Heart right ventricle (tissue), 16 donors: ENCODE measurements at regions of chr19 and their contacts with region 1.

Region 1: GRCh38 chr19:41133260-41133659 is 19.0 kb downstream of the CYP2F1 start:
- DNase-seq: no peak
- ATAC-seq: peak in 2 of 8 donors; percentile 16 to 29
- H3K4me3 ChIP-seq: no peak overlapping the region
- H3K27ac ChIP-seq: no peak overlapping the region
- H3K4me1 ChIP-seq: peaks cover 0 to 8% (median 0%) of the 10 kb centered on the region in 9 donors
- H3K27me3 ChIP-seq: peaks cover 0 to 8% (median 0%) of the 10 kb centered on the region in 7 donors
- CTCF ChIP-seq: no peak

Region 2: DNA sequence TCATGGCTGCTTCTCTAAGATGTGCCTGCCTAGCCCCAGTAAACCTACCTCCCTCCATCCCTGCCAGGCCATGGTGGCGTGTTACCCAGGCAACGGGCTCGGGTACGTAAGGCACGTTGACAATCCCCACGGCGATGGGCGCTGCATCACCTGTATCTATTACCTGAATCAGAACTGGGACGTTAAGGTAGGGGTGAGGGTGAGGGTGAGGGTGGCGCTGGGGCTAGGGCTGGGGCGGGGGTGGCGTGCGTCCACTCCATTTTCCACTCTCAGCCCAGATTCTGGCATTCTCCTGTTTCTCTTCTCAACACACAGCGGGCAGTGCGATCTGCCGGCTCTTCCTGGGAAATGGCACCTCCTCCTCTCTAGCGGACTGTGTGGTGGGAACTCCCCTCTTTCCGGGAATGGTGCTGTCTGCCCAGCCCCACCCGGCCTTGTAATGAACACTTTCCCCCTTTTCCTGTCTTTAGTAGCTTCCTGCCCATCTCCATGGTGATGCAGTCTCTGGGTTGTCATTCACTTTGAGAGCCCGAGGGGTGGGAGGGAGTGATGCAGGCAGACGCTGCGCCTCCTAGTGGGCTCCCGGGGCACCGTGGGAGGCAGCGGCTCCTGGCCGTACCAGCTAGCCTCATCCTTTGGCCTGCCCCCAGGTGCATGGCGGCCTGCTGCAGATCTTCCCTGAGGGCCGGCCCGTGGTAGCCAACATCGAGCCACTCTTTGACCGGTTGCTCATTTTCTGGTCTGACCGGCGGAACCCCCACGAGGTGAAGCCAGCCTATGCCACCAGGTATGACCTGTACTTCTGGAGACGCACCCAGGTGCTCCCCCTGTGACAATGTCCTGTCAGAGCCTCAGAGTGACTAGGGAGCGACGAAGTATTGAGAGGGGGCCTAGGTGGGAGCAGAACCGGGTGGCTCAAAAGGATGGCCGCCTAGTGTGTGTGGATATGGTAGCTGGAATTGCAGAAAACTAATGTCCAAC is 326.5 kb before region 1 on chr19:
- intact Hi-C with region 1: loop called in 1 of 10 experiments (anchors 5 kb)
- DNase-seq: peak; percentile 80 to 92
- ATAC-seq: peak; percentile 30 to 72 (median 58)
- H3K4me3 ChIP-seq: peak overlapping the region in 6 of 10 donors; percentile 2 to 32 (median 24)
- H3K27ac ChIP-seq: peak overlapping the region; percentile 42 to 99 (median 94)
- H3K4me1 ChIP-seq: peaks cover 47 to 93% (median 89%) of the 10 kb centered on the region in 9 donors
- H3K27me3 ChIP-seq: no peaks in the 10 kb centered on the region
- CTCF ChIP-seq: peak; percentile 61 to 94 (median 87)

Region 3: DNA sequence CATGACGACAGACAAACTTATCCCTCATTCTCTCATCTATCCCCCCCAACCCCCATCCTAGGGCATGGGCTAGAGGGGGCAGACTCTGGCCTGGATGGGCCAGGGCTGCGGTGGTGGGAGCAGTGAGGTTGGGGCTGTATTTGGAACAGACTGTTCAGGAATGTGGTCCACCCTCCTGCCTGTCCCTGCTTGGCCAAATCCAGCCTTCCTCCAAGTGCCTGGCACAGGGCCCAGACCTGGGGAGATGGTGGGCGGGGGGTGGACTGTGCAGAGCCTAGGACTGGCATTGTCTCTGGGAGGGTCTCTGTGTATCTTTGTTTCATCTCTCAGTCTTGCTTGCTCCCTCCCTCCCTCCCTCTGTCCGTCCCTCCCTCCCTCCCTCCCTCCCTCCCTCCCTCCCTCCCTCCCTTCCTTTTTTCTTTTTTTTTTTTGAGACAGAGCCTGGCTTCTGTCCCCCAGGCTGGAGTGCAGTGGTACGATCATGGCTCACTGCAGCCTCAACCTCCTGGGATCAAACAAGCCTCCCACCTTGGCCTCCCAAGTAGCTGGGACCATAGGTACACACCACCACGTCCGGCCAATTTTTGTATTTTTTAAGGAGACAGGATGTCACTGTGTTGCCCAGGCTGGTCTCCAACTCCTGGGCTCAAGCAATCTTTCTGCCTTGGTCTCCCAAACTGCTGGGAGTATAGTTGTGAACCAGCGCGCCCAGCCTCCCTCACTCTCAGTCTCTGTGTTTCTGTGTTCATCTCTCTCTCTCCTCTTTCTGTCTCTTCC is 319.9 kb before region 1 on chr19:
- intact Hi-C with region 1: loop called in 2 of 10 experiments (anchors 5 kb)
- DNase-seq: no peak
- ATAC-seq: no peak
- H3K4me3 ChIP-seq: no peak overlapping the region
- H3K27ac ChIP-seq: no peak overlapping the region
- H3K4me1 ChIP-seq: peaks cover 3 to 47% (median 34%) of the 10 kb centered on the region in 9 donors
- H3K27me3 ChIP-seq: no peaks in the 10 kb centered on the region
- CTCF ChIP-seq: no peak

Region 4: DNA sequence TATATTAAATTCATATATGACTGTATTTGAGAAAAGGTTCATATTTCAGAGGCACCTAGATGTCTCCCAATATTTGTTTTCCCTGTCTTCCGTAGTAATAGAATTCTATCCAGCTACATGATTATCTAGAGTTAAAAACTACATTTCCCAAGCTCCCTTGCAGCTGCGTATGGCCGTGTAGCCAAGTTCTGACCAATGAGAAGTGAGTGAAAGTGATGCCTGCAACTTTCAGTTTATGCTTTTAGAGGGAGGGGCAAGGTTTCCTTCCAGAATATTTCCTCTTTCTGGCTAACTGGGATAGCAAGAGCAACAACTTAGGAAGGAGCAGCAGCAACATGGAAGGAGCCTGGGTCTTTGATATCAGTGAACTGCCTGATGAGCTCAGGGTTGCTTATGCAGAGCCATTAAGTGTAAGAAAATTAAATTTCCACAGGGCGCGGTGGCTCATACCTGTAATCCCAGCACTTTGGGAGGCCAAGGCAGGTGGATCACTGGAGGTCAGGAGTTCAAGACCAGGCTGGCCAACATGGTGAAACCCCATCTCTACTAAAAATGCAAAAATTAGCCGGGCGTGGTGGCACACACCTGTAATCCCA is 68.2 kb before region 1 on chr19:
- intact Hi-C with region 1: no loop called
- DNase-seq: no peak
- ATAC-seq: no peak
- H3K4me3 ChIP-seq: no peak overlapping the region
- H3K27ac ChIP-seq: no peak overlapping the region
- H3K4me1 ChIP-seq: no peaks in the 10 kb centered on the region
- H3K27me3 ChIP-seq: peaks cover 0 to 31% (median 12%) of the 10 kb centered on the region in 7 donors
- CTCF ChIP-seq: no peak

Region 5: GRCh38 chr19:41095703-41096102 is 37.6 kb before region 1 on chr19:
- intact Hi-C with region 1: no loop called
- DNase-seq: no peak
- ATAC-seq: no peak
- H3K4me3 ChIP-seq: no peak overlapping the region
- H3K27ac ChIP-seq: no peak overlapping the region
- H3K4me1 ChIP-seq: no peaks in the 10 kb centered on the region
- H3K27me3 ChIP-seq: peaks cover 0 to 44% (median 27%) of the 10 kb centered on the region in 7 donors
- CTCF ChIP-seq: no peak

Region 6: GRCh38 chr19:41189425-41190065 is 56.3 kb after region 1 on chr19:
- intact Hi-C with region 1: no loop called
- DNase-seq: no peak
- ATAC-seq: no peak
- H3K4me3 ChIP-seq: no peak overlapping the region
- H3K27ac ChIP-seq: no peak overlapping the region
- H3K4me1 ChIP-seq: peaks cover 0 to 23% (median 4%) of the 10 kb centered on the region in 9 donors
- H3K27me3 ChIP-seq: peaks cover 0 to 74% (median 71%) of the 10 kb centered on the region in 7 donors
- CTCF ChIP-seq: no peak